MCF 10A (cell line): ENCODE measurements at regions of chr7 and their contacts with region 1.

Region 1: GRCh38 chr7:150988230-150989226 is 2.3 kb upstream of the NOS3 start:
- DNase-seq: peak; percentile 43
- H3K4me3 Mint-ChIP-seq: no peak overlapping the region
- H3K27ac Mint-ChIP-seq: no peak overlapping the region
- H3K4me1 Mint-ChIP-seq: peaks cover 7% of the 10 kb centered on the region
- H3K27me3 Mint-ChIP-seq: peaks cover 11% of the 10 kb centered on the region
- CTCF ChIP-seq: peak; percentile 82

Region 2: DNA sequence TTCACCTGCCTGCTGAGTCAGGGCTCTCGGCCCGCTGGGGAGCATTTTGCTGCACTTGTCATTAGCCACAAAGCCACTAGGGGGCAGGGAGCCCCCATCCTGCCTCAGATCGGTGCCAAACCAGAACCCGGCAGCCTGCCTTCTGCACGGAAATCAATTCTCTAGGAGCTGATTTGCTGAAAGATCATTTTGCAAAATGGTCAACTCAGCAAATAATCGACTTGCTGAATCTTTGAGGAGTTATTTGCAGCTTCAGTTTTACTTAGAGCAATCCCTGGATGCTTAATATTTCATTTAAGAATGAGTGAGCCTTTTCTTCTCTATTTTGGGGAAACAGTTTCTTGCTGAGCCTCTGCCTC is 539.8 kb before region 1 on chr7:
- CTCF ChIA-PET with region 1: no interaction called
- POLR2A ChIA-PET with region 1: no interaction called
- intact Hi-C with region 1: loop called (anchors 5 kb)
- DNase-seq: peak; percentile 73
- H3K4me3 Mint-ChIP-seq: no peak overlapping the region
- H3K27ac Mint-ChIP-seq: no peak overlapping the region
- H3K4me1 Mint-ChIP-seq: no peaks in the 10 kb centered on the region
- H3K27me3 Mint-ChIP-seq: peaks cover 17% of the 10 kb centered on the region
- CTCF ChIP-seq: peak; percentile 93

Region 3: DNA sequence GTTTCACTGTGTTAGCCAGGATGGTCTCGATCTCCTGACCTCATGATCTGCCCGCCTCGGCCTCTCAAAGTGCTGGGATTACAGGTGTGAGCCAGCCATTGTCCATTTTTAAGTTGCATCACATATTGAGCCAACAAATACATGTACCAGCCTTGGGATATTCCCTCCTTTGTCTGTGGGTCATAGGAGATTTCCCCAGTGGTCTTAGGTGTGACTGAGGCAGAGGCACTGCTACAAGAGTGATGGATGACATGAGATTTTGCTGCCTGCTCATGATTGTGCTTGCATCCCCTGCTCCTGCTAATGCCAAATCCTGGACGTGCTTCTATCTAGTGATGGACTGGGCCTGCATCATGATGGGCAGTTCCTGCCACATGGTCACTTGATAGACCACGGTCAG is 345.6 kb before region 1 on chr7:
- CTCF ChIA-PET with region 1: no interaction called
- POLR2A ChIA-PET with region 1: no interaction called
- intact Hi-C with region 1: no loop called
- DNase-seq: no peak
- H3K4me3 Mint-ChIP-seq: no peak overlapping the region
- H3K27ac Mint-ChIP-seq: no peak overlapping the region
- H3K4me1 Mint-ChIP-seq: no peaks in the 10 kb centered on the region
- H3K27me3 Mint-ChIP-seq: no peaks in the 10 kb centered on the region
- CTCF ChIP-seq: no peak

Region 4: DNA sequence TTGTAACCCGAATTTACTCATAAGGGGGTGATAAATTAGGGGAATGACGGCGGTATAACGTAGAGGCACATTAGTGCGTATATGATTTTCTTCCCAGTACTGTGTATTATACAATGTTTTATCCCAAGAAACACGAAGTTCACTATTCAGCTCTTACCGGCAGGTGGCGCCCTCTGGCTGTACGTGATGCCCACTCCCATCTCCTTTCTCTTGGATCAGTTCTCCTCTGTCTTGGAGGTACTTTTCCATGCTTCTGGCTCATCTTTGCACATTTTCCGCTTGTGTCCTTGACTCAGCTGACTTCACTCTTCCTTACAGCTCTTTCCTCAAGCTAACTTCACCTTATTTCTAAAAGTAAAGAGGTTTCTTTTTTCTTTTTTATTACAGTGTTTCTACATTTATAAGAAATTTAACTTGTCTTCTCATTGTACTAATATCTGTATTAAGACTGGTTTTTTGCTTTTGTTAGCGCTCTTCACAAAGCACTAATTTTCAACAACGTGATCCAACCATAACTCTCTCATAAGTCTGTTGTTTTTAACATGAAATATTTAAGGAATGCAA is 209.7 kb before region 1 on chr7:
- CTCF ChIA-PET with region 1: interaction called, 9 read pairs
- POLR2A ChIA-PET with region 1: no interaction called
- intact Hi-C with region 1: loop called (anchors 1 kb)
- DNase-seq: peak; percentile 75
- H3K4me3 Mint-ChIP-seq: no peak overlapping the region
- H3K27ac Mint-ChIP-seq: no peak overlapping the region
- H3K4me1 Mint-ChIP-seq: no peaks in the 10 kb centered on the region
- H3K27me3 Mint-ChIP-seq: peaks cover 23% of the 10 kb centered on the region
- CTCF ChIP-seq: peak; percentile 76

Region 5: GRCh38 chr7:150867605-150868004 is 120.9 kb before region 1 on chr7:
- CTCF ChIA-PET with region 1: no interaction called
- POLR2A ChIA-PET with region 1: no interaction called
- intact Hi-C with region 1: no loop called
- DNase-seq: no peak
- H3K4me3 Mint-ChIP-seq: no peak overlapping the region
- H3K27ac Mint-ChIP-seq: no peak overlapping the region
- H3K4me1 Mint-ChIP-seq: no peaks in the 10 kb centered on the region
- H3K27me3 Mint-ChIP-seq: peaks cover 68% of the 10 kb centered on the region
- CTCF ChIP-seq: no peak

Region 6: DNA sequence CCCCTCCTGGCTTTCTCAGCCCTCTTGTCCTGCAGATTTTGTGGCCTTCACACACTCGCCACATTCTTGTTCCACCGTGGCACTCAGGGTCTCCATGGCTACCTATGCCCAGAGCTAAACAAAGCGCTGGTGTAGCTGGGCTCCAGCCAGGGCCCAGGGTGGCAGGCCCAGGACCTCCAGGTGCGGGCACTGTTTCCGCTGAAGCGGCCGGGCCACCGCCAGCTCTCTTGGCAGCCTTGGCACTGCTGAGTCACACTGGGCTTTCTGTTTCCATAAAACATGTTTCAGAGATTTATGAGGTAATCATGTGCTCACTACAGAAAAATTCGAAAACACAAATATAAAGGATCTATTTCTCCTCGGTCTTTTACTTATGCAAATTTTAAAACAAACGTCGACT is 84.9 kb before region 1 on chr7:
- CTCF ChIA-PET with region 1: interaction called, 43 read pairs
- POLR2A ChIA-PET with region 1: interaction called, 3 read pairs
- intact Hi-C with region 1: loop called (anchors 1 kb)
- DNase-seq: peak; percentile 79
- H3K4me3 Mint-ChIP-seq: no peak overlapping the region
- H3K27ac Mint-ChIP-seq: peak overlapping the region; percentile 60
- H3K4me1 Mint-ChIP-seq: peaks cover 26% of the 10 kb centered on the region
- H3K27me3 Mint-ChIP-seq: no peaks in the 10 kb centered on the region
- CTCF ChIP-seq: no peak

Region 7: DNA sequence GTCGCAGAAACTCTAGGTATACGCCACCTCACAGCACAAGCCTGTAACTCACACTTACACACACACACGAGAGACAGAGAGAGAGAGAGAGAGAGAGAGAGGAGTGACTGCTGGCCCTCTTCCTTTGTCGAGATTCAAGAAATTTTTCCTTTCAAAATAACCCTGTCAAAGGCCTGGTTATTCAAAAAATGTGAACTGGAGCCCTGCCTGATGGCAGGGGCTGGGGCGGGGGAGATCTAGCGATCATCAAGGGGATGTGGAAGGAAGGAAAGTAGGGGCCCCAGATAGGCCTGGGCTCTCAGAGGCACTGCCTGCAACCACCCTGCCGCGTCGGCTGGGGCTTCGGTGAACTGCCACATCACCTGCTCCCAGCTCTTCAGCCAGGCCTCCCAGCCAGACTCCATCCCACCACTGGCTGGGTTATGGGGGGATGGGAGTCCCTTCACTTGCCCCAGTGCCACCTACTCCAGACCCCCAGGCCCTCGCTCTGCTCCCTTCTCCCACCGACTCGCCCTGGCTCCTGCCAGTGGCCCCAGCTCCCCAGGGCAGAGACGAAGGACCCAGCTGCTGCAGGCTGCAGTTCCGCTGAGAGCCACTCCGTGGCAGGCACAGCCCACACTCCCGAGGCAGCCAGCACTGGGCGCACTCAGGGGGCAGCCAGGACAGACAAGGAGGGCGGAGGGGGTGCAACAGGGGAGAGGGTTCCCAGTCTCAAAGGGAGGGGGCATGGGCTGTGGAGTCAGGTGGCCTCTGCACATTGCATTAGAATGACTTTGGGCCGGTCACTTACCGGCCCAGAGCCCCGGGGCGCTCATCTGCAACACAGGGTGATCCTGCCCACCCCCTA is 25.8 kb before region 1 on chr7:
- CTCF ChIA-PET with region 1: interaction called, 18 read pairs
- POLR2A ChIA-PET with region 1: interaction called, 3 read pairs
- intact Hi-C with region 1: loop called (anchors 1 kb)
- DNase-seq: peak; percentile 31
- H3K4me3 Mint-ChIP-seq: no peak overlapping the region
- H3K27ac Mint-ChIP-seq: no peak overlapping the region
- H3K4me1 Mint-ChIP-seq: no peaks in the 10 kb centered on the region
- H3K27me3 Mint-ChIP-seq: peaks cover 32% of the 10 kb centered on the region
- CTCF ChIP-seq: peak; percentile 92

Region 8: DNA sequence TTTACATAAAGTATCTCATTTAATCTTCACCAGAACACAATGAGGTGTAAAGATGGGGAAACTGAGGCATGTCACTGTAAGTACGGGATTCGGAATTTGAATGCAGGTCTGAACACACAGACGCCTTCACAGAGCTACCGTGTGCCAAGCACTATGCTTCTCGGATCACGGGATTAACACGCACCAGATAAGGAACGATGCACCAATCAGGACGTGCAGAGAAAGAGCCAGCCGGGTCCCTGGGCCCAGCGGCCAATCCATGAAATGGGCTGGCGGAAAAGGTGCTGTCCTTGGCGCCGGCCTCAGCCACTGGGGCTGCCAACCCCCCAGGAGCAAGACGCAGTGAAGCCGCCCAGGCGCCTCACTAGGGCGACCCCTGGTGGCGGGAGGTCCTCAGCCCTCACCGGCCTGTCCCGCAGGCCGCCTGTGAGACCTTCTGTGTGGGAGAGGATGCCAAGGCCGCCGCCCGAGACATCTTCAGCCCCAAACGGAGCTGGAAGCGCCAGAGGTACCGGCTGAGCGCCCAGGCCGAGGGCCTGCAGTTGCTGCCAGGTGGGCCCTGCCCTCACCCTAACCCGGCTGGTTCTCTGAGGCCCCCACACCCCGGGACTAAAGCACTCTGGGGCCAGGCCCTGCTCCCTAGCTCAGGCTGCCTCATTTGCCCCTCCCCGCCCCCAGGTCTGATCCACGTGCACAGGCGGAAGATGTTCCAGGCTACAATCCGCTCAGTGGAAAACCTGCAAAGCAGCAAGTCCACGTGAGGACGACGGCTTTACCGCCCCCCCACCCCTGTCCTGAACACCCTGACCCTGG is 20.2 kb after region 1 on chr7:
- CTCF ChIA-PET with region 1: interaction called, 11 read pairs
- POLR2A ChIA-PET with region 1: no interaction called
- intact Hi-C with region 1: no loop called
- DNase-seq: peak; percentile 40
- H3K4me3 Mint-ChIP-seq: no peak overlapping the region
- H3K27ac Mint-ChIP-seq: no peak overlapping the region
- H3K4me1 Mint-ChIP-seq: peaks cover 22% of the 10 kb centered on the region
- H3K27me3 Mint-ChIP-seq: peaks cover 10% of the 10 kb centered on the region
- CTCF ChIP-seq: peak; percentile 59

Region 9: DNA sequence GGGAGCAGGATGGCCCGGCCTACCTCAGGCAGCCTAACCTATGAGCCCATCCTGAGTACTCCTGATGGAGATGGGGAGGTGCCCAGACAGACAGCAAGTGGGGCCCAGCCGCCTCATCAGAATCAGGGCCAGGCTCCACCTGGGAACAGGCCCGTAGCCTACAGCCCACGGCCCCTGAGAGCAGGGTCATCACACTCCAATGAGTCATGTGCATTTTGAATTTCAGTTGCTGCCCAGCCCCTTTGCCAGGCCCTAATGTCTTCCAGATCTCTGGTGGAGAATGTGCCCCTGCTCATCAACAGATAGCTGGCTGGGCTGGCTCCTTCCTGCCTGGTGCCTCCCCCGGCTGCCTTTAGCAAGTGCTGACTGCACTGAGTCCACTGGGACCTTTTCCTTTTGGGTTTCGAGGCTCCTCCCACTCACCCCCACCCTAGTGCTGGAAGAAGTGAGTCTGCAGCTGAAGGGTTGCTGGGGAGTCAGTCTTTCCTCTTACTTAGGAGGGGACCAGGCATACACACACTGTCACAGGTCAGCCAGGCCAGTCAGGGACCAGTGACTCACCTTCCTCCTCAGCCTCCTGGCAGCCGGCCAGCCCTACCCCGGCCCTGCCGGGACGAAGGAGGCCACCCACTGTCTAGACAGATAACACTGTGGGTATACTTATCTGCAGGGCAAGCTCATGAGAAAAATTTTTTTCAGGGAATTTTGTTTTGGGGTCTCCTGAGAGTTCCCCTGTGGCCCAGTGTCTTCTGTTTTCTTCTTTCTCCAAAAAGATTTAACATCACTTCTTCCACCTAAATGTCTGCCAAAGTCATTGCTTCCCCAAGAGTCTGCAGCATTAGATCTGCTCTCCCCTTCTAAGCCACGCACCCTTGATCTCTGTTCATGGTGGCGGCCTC is 50.7 kb after region 1 on chr7:
- CTCF ChIA-PET with region 1: no interaction called
- POLR2A ChIA-PET with region 1: no interaction called
- intact Hi-C with region 1: no loop called
- DNase-seq: peak; percentile 85
- H3K4me3 Mint-ChIP-seq: no peak overlapping the region
- H3K27ac Mint-ChIP-seq: peak overlapping the region; percentile 23
- H3K4me1 Mint-ChIP-seq: peaks cover 15% of the 10 kb centered on the region
- H3K27me3 Mint-ChIP-seq: no peaks in the 10 kb centered on the region
- CTCF ChIP-seq: no peak